ENCODE measurements at regions of chrX and their contacts with region 1.

Region 1: GRCh38 chrX:118872102-118872566 is 48.5 kb downstream of the ZCCHC12 start:
- ATAC-seq: peak in 5 of 8 experiments; percentile 20 to 80 (median 26)
- H3K4me3 ChIP-seq: no peak overlapping the region
- H3K27ac ChIP-seq: no peak overlapping the region
- H3K4me1 ChIP-seq: no peaks in the 10 kb centered on the region

Region 2: DNA sequence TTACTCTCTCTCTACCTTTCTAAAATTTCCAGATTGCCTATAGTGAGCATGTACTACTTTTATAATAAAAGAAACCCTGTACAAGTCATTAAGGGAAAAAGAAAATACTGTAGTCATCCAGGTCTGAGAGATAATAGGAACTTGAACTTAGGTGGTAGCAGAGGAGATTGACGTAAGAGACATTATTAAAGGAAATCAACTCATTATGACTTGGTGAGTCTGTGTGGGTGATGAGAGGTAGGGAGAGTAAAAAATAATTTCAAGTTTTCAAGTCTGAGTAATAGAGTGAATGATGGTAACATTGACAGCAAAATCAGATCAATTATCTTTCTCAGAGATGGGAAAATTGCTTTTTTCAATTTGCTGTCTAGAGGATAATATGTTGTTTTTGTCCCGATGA is 92.6 kb before region 1 on chrX:
- in situ Hi-C with region 1: no loop called
- ATAC-seq: no peak
- H3K4me3 ChIP-seq: no peak overlapping the region
- H3K27ac ChIP-seq: no peak overlapping the region
- H3K4me1 ChIP-seq: no peaks in the 10 kb centered on the region

Region 3: GRCh38 chrX:119004920-119005524 is 132.9 kb after region 1 on chrX:
- in situ Hi-C with region 1: loop called in 1 of 9 experiments (anchors 25 kb)
- ATAC-seq: peak in 7 of 8 experiments; percentile 45 to 93 (median 78)
- H3K4me3 ChIP-seq: no peak overlapping the region
- H3K27ac ChIP-seq: no peak overlapping the region
- H3K4me1 ChIP-seq: peaks cover 0 to 4% of the 10 kb centered on the region in 2 donors

Region 4: GRCh38 chrX:119067023-119067739 is 195.0 kb after region 1 on chrX:
- in situ Hi-C with region 1: loop called in 1 of 9 experiments (anchors 25 kb)
- ATAC-seq: peak; percentile 23 to 84 (median 58)
- H3K4me3 ChIP-seq: no peak overlapping the region
- H3K27ac ChIP-seq: no peak overlapping the region
- H3K4me1 ChIP-seq: no peaks in the 10 kb centered on the region

Region 5: GRCh38 chrX:119235872-119236622 is 363.9 kb after region 1 on chrX and contains the start of gene PGRMC1:
- in situ Hi-C with region 1: no loop called
- ATAC-seq: peak; percentile 79 to 89 (median 82)
- H3K4me3 ChIP-seq: peak within 1 kb of the TSS; percentile 62 to 95 (median 90)
- H3K27ac ChIP-seq: peak within 1 kb of the TSS; percentile 79 to 84
- H3K4me1 ChIP-seq: peaks cover 10 to 29% of the 10 kb centered on the region in 2 donors
- total RNA-seq, gene PGRMC1: 56.6 to 183 (median 147) TPM

Measured in motor neuron (in vitro differentiated cells).